ENCODE measurements at regions of chr15 and their contacts with region 1.

Region 1: DNA sequence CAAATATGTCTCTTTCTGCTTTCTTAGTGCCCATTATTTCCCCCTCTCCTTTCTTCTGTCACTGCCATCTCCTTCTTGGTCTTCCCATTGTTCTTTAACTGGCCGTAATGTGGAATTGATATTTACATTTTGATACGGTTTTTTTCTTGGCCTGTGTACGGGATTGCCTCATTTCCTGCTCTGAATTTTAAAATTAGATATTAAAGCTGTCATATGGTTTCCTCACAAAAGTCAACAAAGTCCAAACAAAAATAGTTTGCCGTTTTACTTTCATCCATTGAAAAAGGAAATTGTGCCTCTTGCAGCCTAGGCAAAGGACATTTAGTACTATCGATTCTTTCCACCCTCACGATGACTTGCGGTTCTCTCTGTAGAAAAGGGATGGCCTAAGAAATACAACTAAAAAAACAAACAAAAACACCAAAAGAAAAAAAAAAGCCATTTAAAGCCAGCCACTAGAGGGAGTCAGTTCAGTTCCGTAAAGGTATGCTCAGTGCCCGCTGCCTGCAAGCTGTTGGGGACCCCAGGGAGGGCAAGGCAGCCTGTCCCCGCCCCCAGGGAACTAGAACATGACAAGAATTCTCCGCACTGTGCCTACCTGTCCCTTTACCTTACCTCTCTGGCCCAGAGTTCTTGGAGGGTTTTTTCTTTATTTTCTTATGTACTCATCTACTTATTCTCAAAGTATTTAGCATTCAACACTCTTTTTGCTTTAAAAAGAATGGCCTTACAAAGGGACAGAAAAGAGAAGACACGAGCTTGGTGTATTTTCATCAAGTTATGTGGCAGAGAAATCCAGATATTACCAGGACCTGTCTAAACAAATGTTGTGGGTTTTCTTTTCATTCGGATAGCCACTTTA is 30.0 kb upstream of the NR2E3 start:
- DNase-seq: peak in 2 of 3 donors; percentile 12 to 21
- H3K4me3 ChIP-seq: no peak overlapping the region
- H3K4me3 Mint-ChIP-seq: peak overlapping the region in 1 of 2 donors; percentile 58
- H3K27ac ChIP-seq: no peak overlapping the region
- H3K27ac Mint-ChIP-seq: no peak overlapping the region
- H3K4me1 ChIP-seq: peaks cover 0 to 4% of the 10 kb centered on the region in 2 donors
- H3K4me1 Mint-ChIP-seq: peaks cover 8% of the 10 kb centered on the region
- H3K27me3 ChIP-seq: no peaks in the 10 kb centered on the region
- H3K27me3 Mint-ChIP-seq: peaks cover 3 to 6% (median 4%) of the 10 kb centered on the region in 3 donors
- CTCF ChIP-seq: peak; percentile 86

Region 2: GRCh38 chr15:71916834-71917233 is 136.5 kb after region 1 on chr15:
- intact Hi-C with region 1: no loop called
- DNase-seq: no peak
- H3K4me3 ChIP-seq: no peak overlapping the region
- H3K4me3 Mint-ChIP-seq: no peak overlapping the region
- H3K27ac ChIP-seq: no peak overlapping the region
- H3K27ac Mint-ChIP-seq: no peak overlapping the region
- H3K4me1 ChIP-seq: no peaks in the 10 kb centered on the region
- H3K4me1 Mint-ChIP-seq: no peaks in the 10 kb centered on the region
- H3K27me3 ChIP-seq: no peaks in the 10 kb centered on the region
- H3K27me3 Mint-ChIP-seq: no peaks in the 10 kb centered on the region
- CTCF ChIP-seq: no peak

Region 3: DNA sequence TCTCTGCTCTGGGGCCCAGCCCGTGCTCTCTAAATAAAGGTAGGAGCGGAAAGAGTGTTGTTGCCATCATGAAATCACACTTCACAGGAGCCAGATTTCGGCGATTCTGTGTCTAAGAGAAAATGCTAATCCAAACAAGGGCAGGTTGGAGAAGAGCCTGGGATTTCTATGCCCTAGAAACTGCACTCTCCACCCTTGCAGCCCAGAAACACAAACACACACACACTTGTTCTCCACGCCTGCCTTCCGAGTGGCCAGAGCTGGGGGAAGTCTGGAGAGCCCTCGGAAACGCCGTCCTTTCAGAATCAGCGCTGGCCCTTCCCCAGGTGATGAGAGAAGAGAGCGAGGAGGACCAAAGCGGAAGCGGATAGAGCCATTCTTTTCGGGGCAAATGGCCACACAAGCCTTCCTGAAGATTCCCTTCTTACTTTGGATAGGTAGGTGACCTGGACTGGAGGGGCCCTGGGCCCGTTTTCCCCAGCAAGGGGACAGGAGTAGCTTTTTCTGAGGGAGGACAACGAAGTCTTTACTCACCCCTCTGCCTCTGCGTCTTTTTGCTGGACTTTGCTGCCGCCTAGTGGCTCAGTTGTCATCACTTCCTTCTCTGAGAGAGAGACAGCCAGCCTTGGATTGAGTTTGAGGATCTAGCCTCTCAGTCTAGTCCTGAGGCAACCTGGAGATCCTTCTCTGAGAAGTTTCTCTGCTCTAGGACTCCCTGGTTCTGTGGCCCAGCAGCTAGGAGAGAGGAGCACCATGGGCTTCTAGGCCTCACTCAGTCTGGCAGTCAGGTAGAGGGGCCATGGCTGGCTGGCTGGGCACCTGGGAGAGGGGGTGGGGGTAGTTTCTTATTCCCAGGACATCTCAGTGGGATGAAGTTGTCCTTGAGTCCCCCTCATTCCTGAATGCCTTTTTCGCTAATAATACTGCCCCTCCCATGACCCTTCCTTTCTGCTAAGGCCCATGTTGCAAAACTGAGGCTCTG is 375.6 kb after region 1 on chr15:
- intact Hi-C with region 1: loop called (anchors 2 to 5 kb)
- DNase-seq: peak; percentile 70 to 75 (median 74)
- H3K4me3 ChIP-seq: peak overlapping the region; percentile 35 to 74 (median 46)
- H3K4me3 Mint-ChIP-seq: peak overlapping the region; percentile 81 to 92
- H3K27ac ChIP-seq: peak overlapping the region in 1 of 2 donors; percentile 34
- H3K27ac Mint-ChIP-seq: peak overlapping the region in 3 of 7 donors; percentile 7 to 42 (median 41)
- H3K4me1 ChIP-seq: peaks cover 20 to 23% of the 10 kb centered on the region in 2 donors
- H3K4me1 Mint-ChIP-seq: peaks cover 23% of the 10 kb centered on the region
- H3K27me3 ChIP-seq: no peaks in the 10 kb centered on the region
- H3K27me3 Mint-ChIP-seq: peaks cover 3 to 9% (median 3%) of the 10 kb centered on the region in 3 donors
- CTCF ChIP-seq: peak; percentile 89

Measured in CD14-positive monocyte (primary cell).